ENCODE measurements at regions of chr7 and their contacts with region 1.

Region 1: GRCh38 chr7:92043637-92044036 is 90.6 kb downstream of the CYP51A1 start:
- DNase-seq: no peak
- H3K4me3 ChIP-seq: no peak overlapping the region
- H3K4me3 Mint-ChIP-seq: peak overlapping the region; percentile 40
- H3K27ac Mint-ChIP-seq: peak overlapping the region; percentile 70
- H3K4me1 ChIP-seq: peaks cover 60% of the 10 kb centered on the region
- H3K4me1 Mint-ChIP-seq: peaks cover 27% of the 10 kb centered on the region
- H3K27me3 ChIP-seq: no peaks in the 10 kb centered on the region
- H3K27me3 Mint-ChIP-seq: no peaks in the 10 kb centered on the region
- CTCF ChIP-seq: no peak

Region 2: DNA sequence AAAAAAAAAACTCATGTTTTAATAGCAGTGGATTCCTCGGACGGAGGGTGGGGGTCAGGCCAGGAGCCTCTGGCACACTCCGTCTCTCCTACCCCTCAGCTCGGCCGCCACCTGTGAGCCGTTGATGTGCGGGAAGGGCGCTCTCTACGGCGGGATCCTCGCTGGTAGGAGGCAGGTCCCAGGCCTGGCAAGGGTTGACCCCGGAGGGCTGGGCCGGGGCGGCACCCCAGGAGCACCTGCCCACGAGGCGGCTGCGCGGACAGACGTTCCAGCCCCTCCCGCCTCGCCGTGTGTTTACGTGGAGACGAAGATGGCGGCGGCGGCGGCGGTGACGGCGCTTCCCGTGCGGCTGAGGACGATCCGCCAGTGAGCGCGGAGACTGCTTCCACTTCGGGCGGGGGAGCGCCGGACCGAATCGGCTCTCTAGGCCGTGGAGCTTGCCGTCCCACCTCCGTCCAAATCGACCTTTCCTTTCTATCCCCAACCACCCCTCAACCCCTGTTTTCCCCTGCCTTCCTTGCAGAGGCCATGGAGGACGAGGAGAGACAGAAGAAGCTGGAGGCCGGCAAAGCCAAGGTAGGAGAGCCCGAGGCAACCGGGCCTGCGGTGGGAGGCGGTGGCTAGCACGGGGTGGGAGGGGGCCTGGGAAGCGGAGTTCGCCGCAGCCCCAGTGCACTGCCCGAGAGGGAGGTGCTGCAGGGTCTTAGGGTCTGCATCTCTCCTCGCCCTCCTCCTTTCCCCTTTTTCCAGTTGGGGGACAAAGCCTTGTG is 102.9 kb before region 1 on chr7 and contains the start of gene AKAP9:
- CTCF ChIA-PET with region 1: no interaction called
- POLR2A ChIA-PET with region 1: no interaction called
- intact Hi-C with region 1: loop called (anchors 1 kb)
- DNase-seq: peak; percentile 95 to 96
- H3K4me3 ChIP-seq: peak within 1 kb of the TSS; percentile 76
- H3K4me3 Mint-ChIP-seq: peak within 1 kb of the TSS; percentile 95
- H3K27ac Mint-ChIP-seq: peak within 1 kb of the TSS; percentile 98
- H3K4me1 ChIP-seq: peaks cover 12% of the 10 kb centered on the region
- H3K4me1 Mint-ChIP-seq: peaks cover 16% of the 10 kb centered on the region
- H3K27me3 ChIP-seq: no peaks in the 10 kb centered on the region
- H3K27me3 Mint-ChIP-seq: no peaks in the 10 kb centered on the region
- CTCF ChIP-seq: no peak
- total RNA-seq, gene AKAP9: 73.8 and 79.4 TPM in 2 replicates

Region 3: GRCh38 chr7:92010215-92010614 is 33.4 kb before region 1 on chr7:
- CTCF ChIA-PET with region 1: no interaction called
- POLR2A ChIA-PET with region 1: no interaction called
- intact Hi-C with region 1: loop called (anchors 1 kb)
- DNase-seq: peak; percentile 64 to 69
- H3K4me3 ChIP-seq: no peak overlapping the region
- H3K4me3 Mint-ChIP-seq: no peak overlapping the region
- H3K27ac Mint-ChIP-seq: peak overlapping the region; percentile 55
- H3K4me1 ChIP-seq: peaks cover 8% of the 10 kb centered on the region; the same call in 1 of the 2 replicates
- H3K4me1 Mint-ChIP-seq: no peaks in the 10 kb centered on the region
- H3K27me3 ChIP-seq: no peaks in the 10 kb centered on the region
- H3K27me3 Mint-ChIP-seq: no peaks in the 10 kb centered on the region
- CTCF ChIP-seq: no peak

Region 4: GRCh38 chr7:92028686-92029085 is 15.0 kb before region 1 on chr7:
- CTCF ChIA-PET with region 1: no interaction called
- POLR2A ChIA-PET with region 1: no interaction called
- intact Hi-C with region 1: loop called (anchors 2 kb)
- DNase-seq: no peak
- H3K4me3 ChIP-seq: no peak overlapping the region
- H3K4me3 Mint-ChIP-seq: no peak overlapping the region
- H3K27ac Mint-ChIP-seq: peak overlapping the region; percentile 27
- H3K4me1 ChIP-seq: peaks cover 7% of the 10 kb centered on the region
- H3K4me1 Mint-ChIP-seq: peaks cover 1% of the 10 kb centered on the region
- H3K27me3 ChIP-seq: no peaks in the 10 kb centered on the region
- H3K27me3 Mint-ChIP-seq: no peaks in the 10 kb centered on the region
- CTCF ChIP-seq: no peak

Region 5: DNA sequence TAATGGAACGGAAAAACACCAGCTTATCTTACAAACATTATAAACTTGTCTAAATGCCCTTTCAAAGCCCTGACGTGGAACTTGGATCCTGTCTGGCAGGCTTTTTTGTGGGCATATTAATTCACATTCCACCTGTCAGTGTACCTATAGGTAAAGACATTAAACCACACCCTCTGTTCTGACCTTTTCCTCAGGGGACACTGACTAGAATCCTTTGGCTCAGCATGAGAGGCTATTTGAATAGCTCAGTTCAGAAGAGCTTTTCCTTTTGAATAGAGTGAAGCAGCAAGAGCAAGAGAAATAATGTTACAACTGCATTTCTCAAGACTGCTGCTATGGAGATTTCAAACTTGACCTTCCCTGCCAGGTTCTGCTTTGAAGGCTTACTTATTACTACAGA is 13.7 kb after region 1 on chr7:
- CTCF ChIA-PET with region 1: interaction called, 7 read pairs
- POLR2A ChIA-PET with region 1: interaction called, 15 read pairs
- intact Hi-C with region 1: loop called (anchors 1 kb)
- DNase-seq: peak; percentile 74 to 78
- H3K4me3 ChIP-seq: no peak overlapping the region
- H3K4me3 Mint-ChIP-seq: peak overlapping the region; percentile 49
- H3K27ac Mint-ChIP-seq: peak overlapping the region; percentile 55
- H3K4me1 ChIP-seq: peaks cover 51% of the 10 kb centered on the region
- H3K4me1 Mint-ChIP-seq: peaks cover 16% of the 10 kb centered on the region
- H3K27me3 ChIP-seq: no peaks in the 10 kb centered on the region
- H3K27me3 Mint-ChIP-seq: no peaks in the 10 kb centered on the region
- CTCF ChIP-seq: no peak

Region 6: DNA sequence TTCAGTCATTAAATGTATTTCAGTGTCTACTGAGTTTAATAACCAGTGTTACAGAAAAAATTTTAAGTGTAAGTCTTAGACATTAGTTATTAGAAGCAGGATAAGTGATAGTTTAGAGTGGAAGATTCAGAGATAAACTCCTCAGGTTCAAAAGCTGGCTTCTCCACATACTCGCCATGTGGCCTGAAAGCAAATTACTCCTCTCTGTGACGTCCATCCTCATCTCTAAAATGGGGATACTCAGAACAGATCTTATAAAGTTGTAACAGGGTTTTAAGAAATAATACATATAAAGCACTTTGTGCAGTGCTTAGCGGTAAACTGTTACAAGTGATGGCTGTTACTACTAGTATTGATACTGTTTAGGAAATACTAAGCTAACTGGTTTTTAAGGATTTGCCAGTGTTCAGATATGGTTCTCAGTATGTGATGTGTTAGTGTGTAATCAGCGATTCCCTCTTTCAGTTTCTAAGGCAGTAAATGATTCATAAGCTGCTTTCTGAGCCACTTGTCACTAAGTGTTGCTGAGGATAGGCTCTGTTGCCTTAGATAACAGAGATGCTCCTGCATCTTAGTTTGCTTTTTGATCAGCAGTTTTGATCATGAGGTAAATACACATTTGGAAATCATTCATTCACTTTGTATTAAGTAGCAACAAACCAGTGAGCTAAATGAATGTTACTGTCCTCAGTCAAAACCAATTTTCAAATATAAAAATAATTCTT is 32.0 kb after region 1 on chr7:
- CTCF ChIA-PET with region 1: no interaction called
- POLR2A ChIA-PET with region 1: no interaction called
- intact Hi-C with region 1: loop called (anchors 1 kb)
- DNase-seq: peak in 1 of 2 experiments; percentile 3
- H3K4me3 ChIP-seq: no peak overlapping the region
- H3K4me3 Mint-ChIP-seq: no peak overlapping the region
- H3K27ac Mint-ChIP-seq: peak overlapping the region; percentile 74
- H3K4me1 ChIP-seq: peaks cover 17% of the 10 kb centered on the region
- H3K4me1 Mint-ChIP-seq: peaks cover 7% of the 10 kb centered on the region
- H3K27me3 ChIP-seq: no peaks in the 10 kb centered on the region
- H3K27me3 Mint-ChIP-seq: no peaks in the 10 kb centered on the region
- CTCF ChIP-seq: no peak

Measured in Caco-2 (cell line).